ENCODE measurements at regions of chr1 and their contacts with region 1.

Region 1: DNA sequence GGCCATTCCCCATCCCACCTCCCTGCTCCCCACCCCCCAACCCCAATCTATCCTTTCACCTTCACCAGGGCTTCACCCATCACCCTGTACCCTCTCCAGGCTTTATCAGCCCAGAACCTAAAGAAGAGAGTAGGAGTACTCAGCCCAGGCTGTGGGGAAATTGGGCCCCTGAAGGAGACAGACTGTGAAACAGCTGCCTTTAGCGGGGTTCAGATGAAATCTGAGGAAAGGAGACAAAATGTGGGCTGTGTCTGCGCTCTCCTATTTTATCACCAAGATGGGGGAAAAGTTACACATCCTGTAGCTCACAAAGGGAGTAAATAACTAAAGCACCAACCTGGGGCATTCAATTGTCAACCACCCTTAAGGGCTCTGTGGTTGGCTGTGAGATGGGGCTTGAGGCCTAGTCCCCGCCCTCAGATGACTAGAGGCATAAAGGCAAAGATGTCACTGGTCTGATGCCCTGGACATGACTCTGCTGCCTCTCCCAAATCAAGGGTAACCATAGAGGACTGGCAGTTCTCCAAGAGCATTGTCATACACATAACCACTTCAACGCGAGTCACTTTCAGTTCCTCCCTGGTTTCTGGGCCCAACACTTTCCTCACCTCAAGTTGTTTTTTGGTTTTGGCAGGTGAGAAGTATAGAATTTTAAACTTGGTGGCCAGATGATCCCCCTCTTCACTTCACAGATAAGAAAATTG is 30.0 kb downstream of the SLC27A3 start:
- DNase-seq: peak; percentile 91
- ATAC-seq: peak; percentile 98
- H3K4me3 Mint-ChIP-seq: peak overlapping the region; percentile 41
- H3K27ac Mint-ChIP-seq: peak overlapping the region; percentile 90
- H3K4me1 Mint-ChIP-seq: peaks cover 38% of the 10 kb centered on the region
- H3K27me3 Mint-ChIP-seq: no peaks in the 10 kb centered on the region
- CTCF ChIP-seq: no peak

Region 2: GRCh38 chr1:153658400-153659174 is 146.6 kb before region 1 on chr1 and contains the start of gene SNAPIN:
- CTCF ChIA-PET with region 1: no interaction called
- POLR2A ChIA-PET with region 1: no interaction called
- intact Hi-C with region 1: no loop called
- DNase-seq: peak; percentile 96
- ATAC-seq: peak; percentile 95
- H3K4me3 Mint-ChIP-seq: peak within 1 kb of the TSS; percentile 98
- H3K27ac Mint-ChIP-seq: peak within 1 kb of the TSS; percentile 96
- H3K4me1 Mint-ChIP-seq: peaks cover 12% of the 10 kb centered on the region
- H3K27me3 Mint-ChIP-seq: no peaks in the 10 kb centered on the region
- CTCF ChIP-seq: no peak
- total RNA-seq, gene SNAPIN: 25.7 to 27.3 TPM

Region 3: GRCh38 chr1:153790966-153791647 is 14.1 kb before region 1 on chr1:
- CTCF ChIA-PET with region 1: interaction called, 17 read pairs
- POLR2A ChIA-PET with region 1: interaction called, 11 read pairs
- intact Hi-C with region 1: no loop called
- DNase-seq: peak; percentile 62
- ATAC-seq: peak; percentile 91
- H3K4me3 Mint-ChIP-seq: peak overlapping the region; percentile 43
- H3K27ac Mint-ChIP-seq: peak overlapping the region; percentile 80
- H3K4me1 Mint-ChIP-seq: peaks cover 33% of the 10 kb centered on the region
- H3K27me3 Mint-ChIP-seq: peaks cover 2% of the 10 kb centered on the region
- CTCF ChIP-seq: no peak

Region 4: GRCh38 chr1:153967082-153968000 is 162.1 kb after region 1 on chr1 and contains the start of gene CREB3L4:
- CTCF ChIA-PET with region 1: no interaction called
- POLR2A ChIA-PET with region 1: interaction called, 24 read pairs
- intact Hi-C with region 1: no loop called
- DNase-seq: peak; percentile 94
- ATAC-seq: peak; percentile 88
- H3K4me3 Mint-ChIP-seq: peak within 1 kb of the TSS; percentile 99
- H3K27ac Mint-ChIP-seq: peak within 1 kb of the TSS; percentile 94
- H3K4me1 Mint-ChIP-seq: peaks cover 32% of the 10 kb centered on the region
- H3K27me3 Mint-ChIP-seq: no peaks in the 10 kb centered on the region
- CTCF ChIP-seq: peak; percentile 18
- total RNA-seq, gene CREB3L4: 8.3 to 8.8 TPM

Region 5: GRCh38 chr1:154062309-154062708 is 257.1 kb after region 1 on chr1:
- CTCF ChIA-PET with region 1: no interaction called
- POLR2A ChIA-PET with region 1: no interaction called
- intact Hi-C with region 1: no loop called
- DNase-seq: no peak
- ATAC-seq: no peak
- H3K4me3 Mint-ChIP-seq: no peak overlapping the region
- H3K27ac Mint-ChIP-seq: no peak overlapping the region
- H3K4me1 Mint-ChIP-seq: peaks cover 3% of the 10 kb centered on the region
- H3K27me3 Mint-ChIP-seq: no peaks in the 10 kb centered on the region
- CTCF ChIP-seq: no peak

Measured in activated CD8-positive, alpha-beta T cell treated with anti-CD3 and anti-CD28 coated beads for 36 hours (primary cell).